Left ventricle myocardium inferior (tissue), 1 donor: ENCODE measurements at regions of chr6 and their contacts with region 1.

Region 1: DNA sequence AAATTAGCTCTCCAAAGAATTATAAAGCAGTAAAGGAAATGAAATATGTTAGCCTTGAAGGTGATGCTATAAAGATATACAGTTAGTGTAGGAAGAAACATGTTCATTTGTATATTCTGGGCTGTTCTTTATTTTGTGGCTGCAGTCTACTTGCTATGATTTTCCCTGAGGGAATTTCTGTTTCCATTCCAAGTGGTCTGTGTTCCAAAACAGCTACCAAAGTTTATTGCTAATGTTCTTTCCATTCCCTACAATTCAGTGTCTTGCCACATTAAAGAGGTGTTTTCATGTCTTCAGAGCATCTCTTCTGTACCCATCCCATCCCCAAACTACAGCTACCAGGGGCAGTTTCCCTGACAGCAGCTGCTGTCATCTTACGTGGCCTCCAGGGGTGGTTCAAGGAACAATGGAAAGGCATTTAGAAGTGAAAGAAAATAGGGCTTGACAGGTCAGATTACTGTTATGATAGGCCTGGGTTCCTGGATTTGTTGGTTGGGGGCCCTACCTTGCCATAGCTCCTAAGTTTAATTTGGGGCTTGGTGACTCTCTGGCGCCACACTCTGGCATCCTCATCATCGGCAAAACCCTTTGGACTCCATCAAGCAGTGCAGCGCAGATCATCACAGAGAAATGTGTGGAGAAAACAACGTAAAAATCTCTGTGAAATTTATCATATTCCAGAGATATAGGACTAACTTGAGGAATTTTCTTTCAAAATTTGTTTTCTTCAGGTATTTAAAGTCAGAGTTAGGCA is 33.8 kb upstream of the AIG1 start:
- DNase-seq: peak; percentile 28
- H3K4me3 ChIP-seq: no peak overlapping the region
- H3K27ac ChIP-seq: no peak overlapping the region
- H3K4me1 ChIP-seq: no peaks in the 10 kb centered on the region
- H3K27me3 ChIP-seq: no peaks in the 10 kb centered on the region
- CTCF ChIP-seq: peak; percentile 78

Region 2: GRCh38 chr6:142692942-142693341 is 333.9 kb before region 1 on chr6:
- intact Hi-C with region 1: loop called (anchors 5 kb)
- DNase-seq: peak; percentile 37
- H3K4me3 ChIP-seq: no peak overlapping the region
- H3K27ac ChIP-seq: peak overlapping the region; percentile 45
- H3K4me1 ChIP-seq: peaks cover 20% of the 10 kb centered on the region
- H3K27me3 ChIP-seq: no peaks in the 10 kb centered on the region
- CTCF ChIP-seq: peak; percentile 95

Region 3: GRCh38 chr6:143098054-143098671 is 71.3 kb after region 1 on chr6:
- intact Hi-C with region 1: no loop called
- DNase-seq: no peak
- H3K4me3 ChIP-seq: no peak overlapping the region
- H3K27ac ChIP-seq: peak overlapping the region; percentile 17
- H3K4me1 ChIP-seq: peaks cover 21% of the 10 kb centered on the region
- H3K27me3 ChIP-seq: no peaks in the 10 kb centered on the region
- CTCF ChIP-seq: no peak